Esophagus squamous epithelium (tissue), 5 donors: ENCODE measurements at regions of chr16 and their contacts with region 1.

Region 1: GRCh38 chr16:75758215-75758614 is 31.9 kb upstream of the CPHXL start:
- DNase-seq: no peak
- H3K4me3 ChIP-seq: no peak overlapping the region
- H3K27ac ChIP-seq: no peak overlapping the region
- H3K4me1 ChIP-seq: peaks cover 0 to 20% (median 5%) of the 10 kb centered on the region in 3 donors
- H3K27me3 ChIP-seq: peaks cover 0 to 2% (median 0%) of the 10 kb centered on the region in 4 donors
- CTCF ChIP-seq: no peak
- POLR2A ChIP-seq: no peak

Region 2: GRCh38 chr16:75471723-75472633 is 286.2 kb before region 1 on chr16:
- intact Hi-C with region 1: loop called (anchors 10 kb)
- DNase-seq: no peak
- H3K4me3 ChIP-seq: no peak overlapping the region
- H3K27ac ChIP-seq: no peak overlapping the region
- H3K4me1 ChIP-seq: peaks cover 0 to 4% (median 0%) of the 10 kb centered on the region in 3 donors
- H3K27me3 ChIP-seq: no peaks in the 10 kb centered on the region
- CTCF ChIP-seq: peak; percentile 38 to 81 (median 70)
- POLR2A ChIP-seq: no peak

Region 3: DNA sequence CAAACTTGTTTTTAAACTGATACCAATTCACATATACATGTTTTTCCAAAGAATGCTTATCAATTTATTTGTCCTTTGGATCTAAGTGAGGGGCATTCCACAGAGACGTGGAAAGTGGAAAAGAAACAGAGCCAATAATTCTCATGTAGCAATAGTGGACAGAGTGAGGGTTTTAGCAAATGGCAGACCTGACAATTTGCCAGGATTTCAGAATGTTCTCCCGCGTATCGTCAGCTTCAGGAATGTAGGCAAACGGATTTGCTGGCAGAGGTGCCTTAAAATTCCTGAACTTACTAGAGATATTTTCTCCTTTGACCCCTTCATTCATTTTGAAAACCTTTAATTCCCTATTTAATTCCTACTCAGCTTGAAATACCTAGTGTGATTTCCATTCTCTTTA is 161.4 kb after region 1 on chr16:
- intact Hi-C with region 1: no loop called
- DNase-seq: no peak
- H3K4me3 ChIP-seq: no peak overlapping the region
- H3K27ac ChIP-seq: no peak overlapping the region
- H3K4me1 ChIP-seq: no peaks in the 10 kb centered on the region
- H3K27me3 ChIP-seq: no peaks in the 10 kb centered on the region
- CTCF ChIP-seq: no peak
- POLR2A ChIP-seq: no peak